ENCODE measurements at regions of chr7 and their contacts with region 1.

Region 1: GRCh38 chr7:80018941-80019752 is 115.5 kb upstream of the GNAI1 start:
- DNase-seq: no peak
- H3K4me3 Mint-ChIP-seq: no peak overlapping the region
- H3K27ac Mint-ChIP-seq: no peak overlapping the region
- H3K4me1 Mint-ChIP-seq: no peaks in the 10 kb centered on the region
- H3K27me3 Mint-ChIP-seq: no peaks in the 10 kb centered on the region

Region 2: DNA sequence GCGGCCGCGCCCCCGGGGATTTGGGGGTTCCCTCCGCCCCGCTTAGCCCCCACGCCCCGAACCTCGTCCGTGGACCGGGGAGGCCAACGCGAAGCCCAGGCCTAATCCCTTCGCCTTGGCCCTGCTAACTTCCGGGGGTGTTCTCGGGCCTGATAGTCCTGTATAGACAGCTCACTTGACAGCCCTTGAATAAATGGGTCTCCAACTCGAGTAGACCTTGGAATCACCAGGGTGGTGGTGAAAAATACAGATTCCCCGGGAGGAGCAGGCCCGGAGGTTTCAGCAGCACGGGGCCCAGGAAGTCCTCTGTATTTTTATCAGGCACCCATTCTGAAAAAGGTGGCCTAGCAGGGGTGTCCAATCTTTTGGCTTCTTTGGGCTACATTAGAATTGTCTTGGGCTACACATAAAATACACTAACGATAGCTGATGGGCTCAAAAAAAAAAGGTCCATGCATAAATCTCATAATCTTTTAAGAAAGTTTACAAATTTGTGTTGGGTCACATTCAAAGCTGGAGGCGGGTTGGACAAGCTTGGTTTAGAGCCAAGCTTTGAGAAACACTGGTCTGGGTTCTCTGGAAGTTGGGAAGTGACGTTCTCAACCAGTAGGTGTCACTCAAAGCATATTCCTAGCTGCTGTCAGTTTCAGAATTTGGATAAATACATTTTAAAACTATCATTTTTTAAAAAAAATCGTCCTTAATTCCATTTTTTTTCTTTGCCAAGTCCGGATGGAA is 1998.8 kb before region 1 on chr7:
- intact Hi-C with region 1: loop called (anchors 5 kb)
- DNase-seq: no peak
- H3K4me3 Mint-ChIP-seq: peak overlapping the region; percentile 63
- H3K27ac Mint-ChIP-seq: peak overlapping the region; percentile 56
- H3K4me1 Mint-ChIP-seq: peaks cover 17% of the 10 kb centered on the region
- H3K27me3 Mint-ChIP-seq: peaks cover 52% of the 10 kb centered on the region